ENCODE measurements at regions of chr4 and their contacts with region 1.

Region 1: GRCh38 chr4:78656968-78657445 is 105.4 kb downstream of the ANXA3 start:
- DNase-seq: peak; percentile 24
- H3K4me3 Mint-ChIP-seq: peak overlapping the region; percentile 51
- H3K27ac Mint-ChIP-seq: peak overlapping the region; percentile 48
- H3K4me1 Mint-ChIP-seq: peaks cover 61% of the 10 kb centered on the region
- H3K27me3 Mint-ChIP-seq: no peaks in the 10 kb centered on the region

Region 2: DNA sequence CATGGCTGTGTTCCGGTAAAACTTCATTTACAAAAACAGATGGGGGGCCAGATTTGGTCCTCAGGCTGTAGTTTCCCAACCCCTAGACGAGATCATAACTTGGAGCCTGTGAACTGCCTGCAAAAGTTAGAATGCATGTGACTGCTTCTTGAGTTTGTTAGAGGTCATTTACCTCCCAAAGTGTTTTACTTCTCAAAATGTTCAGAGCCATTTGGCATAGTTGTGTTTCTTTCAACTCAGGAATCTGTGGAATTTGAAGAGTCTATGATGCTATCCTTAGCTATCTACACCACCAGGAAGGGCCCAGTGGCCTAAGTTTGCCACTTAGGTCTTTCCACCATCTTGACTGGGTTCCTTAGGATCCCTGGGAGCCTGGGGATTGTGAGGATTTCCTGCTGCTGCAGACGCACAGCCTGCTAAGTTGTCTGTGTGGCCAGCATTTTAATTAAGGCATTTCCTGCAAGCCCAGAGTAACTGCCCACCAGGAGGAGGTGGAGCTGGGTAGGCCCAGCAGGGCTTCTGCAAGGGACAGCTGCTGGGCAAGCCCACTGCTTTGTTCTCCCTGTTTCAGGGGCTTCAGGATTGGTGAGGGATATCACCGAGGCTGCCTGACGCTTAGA is 1634.3 kb before region 1 on chr4:
- intact Hi-C with region 1: loop called (anchors 5 kb)
- DNase-seq: no peak
- H3K4me3 Mint-ChIP-seq: no peak overlapping the region
- H3K27ac Mint-ChIP-seq: no peak overlapping the region
- H3K4me1 Mint-ChIP-seq: peaks cover 21% of the 10 kb centered on the region
- H3K27me3 Mint-ChIP-seq: peaks cover 5% of the 10 kb centered on the region

Region 3: GRCh38 chr4:77959566-77960338 is 697.3 kb before region 1 on chr4:
- intact Hi-C with region 1: loop called (anchors 5 kb)
- DNase-seq: no peak
- H3K4me3 Mint-ChIP-seq: no peak overlapping the region
- H3K27ac Mint-ChIP-seq: no peak overlapping the region
- H3K4me1 Mint-ChIP-seq: no peaks in the 10 kb centered on the region
- H3K27me3 Mint-ChIP-seq: peaks cover under 1% of the 10 kb centered on the region

Region 4: DNA sequence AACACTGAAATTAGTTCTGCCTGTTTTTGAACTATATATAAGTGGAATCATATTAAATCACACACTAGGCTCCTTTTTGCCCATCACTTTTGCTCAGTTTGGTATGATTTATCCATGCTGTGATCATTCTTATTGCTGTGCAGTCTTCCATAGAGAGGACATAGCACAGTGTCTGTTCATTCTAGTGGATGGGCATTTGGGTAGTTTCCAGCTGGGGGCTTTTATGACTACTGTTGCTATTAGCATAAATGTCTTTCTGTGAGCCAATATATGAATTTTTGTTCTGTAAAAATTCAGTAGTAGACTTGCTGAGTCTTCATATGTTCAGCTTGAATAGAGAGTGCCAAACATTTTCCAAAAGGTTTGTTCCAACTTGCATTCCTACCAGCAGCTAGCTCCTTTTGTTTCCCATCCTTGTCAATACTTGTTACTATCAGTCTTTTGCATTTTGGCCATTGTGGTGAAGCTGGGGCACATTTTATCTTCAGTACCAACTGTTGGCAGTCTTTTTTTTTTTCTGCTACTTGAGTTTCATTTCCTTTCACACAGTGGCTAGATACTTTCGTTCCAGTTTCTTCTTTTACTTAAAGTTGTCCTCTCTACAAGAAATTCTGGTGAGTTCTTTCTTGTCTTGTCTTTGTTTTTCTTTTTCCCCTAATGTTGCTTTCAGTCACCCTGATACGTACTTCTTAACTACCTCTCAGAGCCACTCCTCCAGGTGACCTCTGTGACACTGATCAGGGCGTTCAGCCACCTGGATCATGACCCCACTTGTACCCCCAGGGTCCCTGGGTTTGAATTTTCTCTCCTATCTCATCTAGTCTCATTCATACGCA is 18.5 kb before region 1 on chr4:
- intact Hi-C with region 1: loop called (anchors 2 kb)
- DNase-seq: no peak
- H3K4me3 Mint-ChIP-seq: peak overlapping the region; percentile 8
- H3K27ac Mint-ChIP-seq: peak overlapping the region; percentile 32
- H3K4me1 Mint-ChIP-seq: peaks cover 51% of the 10 kb centered on the region
- H3K27me3 Mint-ChIP-seq: no peaks in the 10 kb centered on the region

Region 5: DNA sequence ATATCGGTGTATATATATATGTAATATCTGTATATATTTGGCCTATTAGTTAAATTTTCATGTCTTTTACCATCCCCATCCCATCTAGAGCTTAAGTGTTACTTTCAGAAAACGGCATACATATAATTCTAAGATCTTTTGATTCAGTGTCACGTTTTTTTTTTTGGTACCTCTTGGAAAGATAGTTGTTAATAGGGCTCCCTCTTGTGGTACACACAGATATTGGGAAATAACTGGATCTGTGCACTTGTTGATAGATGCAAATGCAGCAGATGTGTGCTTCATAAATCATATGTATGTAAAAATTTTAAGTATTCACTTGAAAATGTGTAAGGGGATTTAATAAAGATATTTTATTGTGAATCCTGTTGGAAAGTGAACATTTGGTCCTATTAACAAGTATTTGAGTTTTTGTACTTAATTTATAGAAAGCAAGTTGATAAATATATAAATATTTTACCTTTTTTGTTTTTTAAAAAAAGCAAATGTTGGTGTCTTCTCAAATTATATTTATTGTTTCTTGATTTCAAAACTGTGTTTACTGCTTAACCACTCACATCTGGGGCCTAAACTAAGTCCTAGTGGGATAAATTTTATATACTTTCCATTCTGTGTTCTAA is 207.5 kb after region 1 on chr4:
- intact Hi-C with region 1: loop called (anchors 2 kb)
- DNase-seq: peak; percentile 12
- H3K4me3 Mint-ChIP-seq: no peak overlapping the region
- H3K27ac Mint-ChIP-seq: no peak overlapping the region
- H3K4me1 Mint-ChIP-seq: peaks cover 15% of the 10 kb centered on the region
- H3K27me3 Mint-ChIP-seq: no peaks in the 10 kb centered on the region

Region 6: GRCh38 chr4:79121875-79122358 is 464.9 kb after region 1 on chr4:
- intact Hi-C with region 1: no loop called
- DNase-seq: no peak
- H3K4me3 Mint-ChIP-seq: no peak overlapping the region
- H3K27ac Mint-ChIP-seq: no peak overlapping the region
- H3K4me1 Mint-ChIP-seq: no peaks in the 10 kb centered on the region
- H3K27me3 Mint-ChIP-seq: no peaks in the 10 kb centered on the region

Region 7: GRCh38 chr4:79906303-79906702 is 1249.3 kb after region 1 on chr4:
- intact Hi-C with region 1: no loop called
- DNase-seq: no peak
- H3K4me3 Mint-ChIP-seq: no peak overlapping the region
- H3K27ac Mint-ChIP-seq: no peak overlapping the region
- H3K4me1 Mint-ChIP-seq: peaks cover 20% of the 10 kb centered on the region
- H3K27me3 Mint-ChIP-seq: no peaks in the 10 kb centered on the region

Region 8: DNA sequence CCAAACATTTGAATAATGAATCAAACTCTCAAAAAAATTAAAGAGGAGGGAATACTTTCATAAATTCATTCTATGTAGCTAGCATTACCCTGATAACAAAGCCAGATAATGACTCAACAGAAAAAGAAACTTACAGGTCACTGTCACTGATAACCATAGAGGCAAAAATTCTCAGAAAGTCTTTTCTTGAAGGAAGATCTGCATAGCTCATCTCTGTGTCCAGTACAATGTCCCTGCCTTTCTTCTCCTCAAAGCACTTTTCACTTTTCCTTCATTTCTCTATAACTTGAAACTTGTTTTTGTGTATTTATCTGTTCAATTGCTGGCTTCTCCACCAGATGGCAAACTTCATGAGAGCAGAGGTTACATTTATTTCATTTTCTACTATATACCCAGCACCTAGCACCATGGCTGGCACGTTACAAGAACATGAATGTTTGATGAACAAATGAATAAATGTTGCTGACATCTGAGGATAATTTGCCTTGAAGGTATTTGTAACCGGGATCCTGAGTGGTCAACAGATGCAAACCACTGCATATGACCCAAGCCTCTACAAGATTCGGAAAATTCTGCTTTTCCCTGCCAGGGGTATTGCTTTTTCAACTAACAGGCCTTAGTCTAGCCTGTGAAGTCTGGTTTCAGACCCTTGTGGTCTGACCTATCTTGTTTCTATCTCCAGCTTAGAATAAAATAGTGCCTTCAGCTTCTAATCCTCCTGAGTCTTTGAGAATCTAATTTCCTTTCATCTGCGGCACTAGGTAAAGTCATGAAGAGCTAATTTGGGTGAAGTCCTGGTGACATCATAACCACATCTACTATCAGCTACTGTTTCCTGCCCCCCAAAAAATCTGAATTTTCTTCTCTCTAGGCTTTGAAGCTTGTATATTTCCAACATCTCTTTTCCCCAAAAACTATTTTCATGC is 1468.5 kb after region 1 on chr4:
- intact Hi-C with region 1: loop called (anchors 5 kb)
- DNase-seq: peak; percentile 17
- H3K4me3 Mint-ChIP-seq: peak overlapping the region; percentile 71
- H3K27ac Mint-ChIP-seq: peak overlapping the region; percentile 92
- H3K4me1 Mint-ChIP-seq: peaks cover 68% of the 10 kb centered on the region
- H3K27me3 Mint-ChIP-seq: no peaks in the 10 kb centered on the region

Measured in activated T-helper 1 cell treated with anti-CD3 and anti-CD28 coated beads, Interleukin-12 subunit alpha, Interleukin-12 subunit beta, Interleukin-2, Interleukin-4 antibody, amounts not matched to agents 30 ng/mL and 10 ng/mL and 1 ng/mL, durations not matched to agents 14 hours and 24 hours and 36 hours (primary cell).